ENCODE measurements at regions of chr2 and their contacts with region 1.

Region 1: GRCh38 chr2:42974721-42975717 is 182.6 kb upstream of the HAAO start:
- DNase-seq: peak; percentile 70
- H3K4me3 Mint-ChIP-seq: no peak overlapping the region
- H3K27ac Mint-ChIP-seq: no peak overlapping the region
- H3K4me1 Mint-ChIP-seq: peaks cover 24% of the 10 kb centered on the region
- H3K27me3 Mint-ChIP-seq: peaks cover 30% of the 10 kb centered on the region

Region 2: DNA sequence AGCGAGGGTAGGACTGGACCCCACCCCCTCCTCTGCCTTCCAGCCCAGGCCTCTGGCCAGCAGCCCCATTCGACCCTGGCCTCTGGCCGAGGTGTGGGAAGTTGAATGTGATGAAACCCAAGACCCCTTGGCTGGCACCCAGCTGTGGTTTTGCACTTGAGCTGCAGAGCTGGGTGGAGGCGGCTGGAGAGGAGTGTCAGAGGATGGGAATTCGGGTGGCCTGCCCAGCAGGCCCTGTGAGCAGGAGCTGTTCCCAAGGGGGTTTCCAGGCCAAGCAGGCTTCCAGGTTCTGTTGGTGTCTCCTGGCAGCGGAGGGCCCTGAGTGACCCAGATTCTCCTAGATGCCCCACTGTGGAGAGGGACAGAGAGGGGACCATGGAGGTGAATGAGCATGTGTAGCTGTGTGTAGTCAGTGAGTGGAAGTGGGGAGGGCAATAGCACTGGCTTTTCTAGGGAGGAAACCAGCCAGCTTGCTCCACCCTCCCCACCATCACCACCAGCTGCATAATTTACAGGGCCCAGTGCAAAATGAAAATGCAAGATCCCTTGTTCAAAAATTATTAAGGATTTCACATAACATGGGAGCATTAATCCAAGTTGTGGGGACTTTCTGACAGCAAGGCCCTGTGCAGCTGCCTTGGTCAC is 10.5 kb before region 1 on chr2:
- CTCF ChIA-PET with region 1: interaction called, 10 read pairs
- DNase-seq: no peak
- H3K4me3 Mint-ChIP-seq: no peak overlapping the region
- H3K27ac Mint-ChIP-seq: no peak overlapping the region
- H3K4me1 Mint-ChIP-seq: peaks cover 9% of the 10 kb centered on the region
- H3K27me3 Mint-ChIP-seq: peaks cover 50% of the 10 kb centered on the region

Region 3: GRCh38 chr2:43131024-43131889 is 156.2 kb after region 1 on chr2:
- CTCF ChIA-PET with region 1: interaction called, 23 read pairs
- DNase-seq: peak; percentile 94
- H3K4me3 Mint-ChIP-seq: peak overlapping the region; percentile 56
- H3K27ac Mint-ChIP-seq: peak overlapping the region; percentile 99
- H3K4me1 Mint-ChIP-seq: peaks cover 91% of the 10 kb centered on the region
- H3K27me3 Mint-ChIP-seq: no peaks in the 10 kb centered on the region

Measured in activated naive CD4-positive, alpha-beta T cell treated with anti-CD3 and anti-CD28 coated beads, Interleukin-2, amount 10 ng/mL, durations not matched to agents 7 days and 5 days (primary cell).